CD8-positive, alpha-beta T cell (primary cell): ENCODE measurements at regions of chr19 and their contacts with region 1.

Region 1: DNA sequence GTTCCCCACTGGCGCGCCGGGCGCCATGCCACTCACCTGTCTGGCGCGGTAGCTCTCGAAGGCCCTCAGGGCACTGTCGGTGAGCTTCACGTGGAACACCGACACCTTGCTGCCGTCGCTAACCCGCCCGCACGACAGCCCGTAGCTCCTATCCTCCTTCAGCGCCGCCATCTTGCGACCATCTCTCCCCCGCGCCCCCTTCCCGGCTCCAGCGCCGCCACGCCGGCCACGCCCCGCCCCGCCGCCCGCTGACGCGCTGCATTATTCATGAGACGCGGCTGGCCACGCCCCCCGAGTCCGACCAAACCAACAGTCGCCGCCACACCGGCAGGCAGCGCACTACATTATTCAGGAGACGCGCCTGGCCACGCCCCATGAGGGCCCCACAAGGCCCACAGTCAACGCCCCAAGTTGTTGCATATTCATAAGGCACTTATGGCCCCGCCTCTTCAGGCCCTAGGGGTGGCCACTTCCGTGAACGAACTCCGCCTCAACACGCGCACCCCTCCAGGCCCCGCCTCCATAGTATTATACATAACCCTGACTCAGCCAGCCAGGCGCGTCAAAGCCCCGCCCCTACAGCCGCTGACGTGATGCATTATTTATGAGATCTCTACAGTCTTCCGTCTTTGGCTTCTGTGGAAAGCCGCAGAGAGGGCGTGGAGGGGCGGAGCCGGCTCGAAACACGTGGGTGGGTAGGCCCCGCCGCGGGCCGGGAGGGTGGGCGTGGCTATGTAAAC is at the start of gene ELL:
- DNase-seq: peak; percentile 100
- ATAC-seq: peak; percentile 89
- H3K4me3 ChIP-seq: peak within 1 kb of the TSS; percentile 85 to 91
- H3K4me3 Mint-ChIP-seq: peak within 1 kb of the TSS; percentile 95
- H3K27ac ChIP-seq: peak within 1 kb of the TSS; percentile 92 to 96
- H3K27ac Mint-ChIP-seq: peak within 1 kb of the TSS; percentile 95
- H3K4me1 ChIP-seq: peaks cover 9% of the 10 kb centered on the region
- H3K4me1 Mint-ChIP-seq: peaks cover 26% of the 10 kb centered on the region
- H3K27me3 ChIP-seq: no peaks in the 10 kb centered on the region
- H3K27me3 Mint-ChIP-seq: no peaks in the 10 kb centered on the region
- CTCF ChIP-seq: no peak
- total RNA-seq, gene ELL: 73.4 to 75.2 TPM

Region 2: DNA sequence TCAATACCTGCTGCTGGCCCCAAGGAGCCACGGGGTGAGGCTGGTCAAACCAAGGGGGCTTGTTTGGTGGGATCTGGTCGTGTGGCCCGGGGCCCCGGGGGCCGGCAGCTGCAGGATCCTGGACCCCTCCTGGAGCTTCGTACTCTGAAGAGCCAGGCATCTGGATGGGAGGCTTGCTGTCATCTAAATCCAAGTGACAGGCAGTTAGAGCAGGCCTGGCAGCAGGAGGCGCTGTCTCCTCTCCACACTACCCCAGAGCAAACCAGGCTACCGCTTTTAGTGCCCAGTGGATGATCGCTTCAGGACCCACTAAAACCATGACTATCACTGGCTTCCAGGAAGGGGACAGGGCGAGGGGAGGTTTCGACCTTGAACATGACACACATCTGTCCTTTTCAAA is 1994.0 kb before region 1 on chr19:
- CTCF ChIA-PET with region 1: no interaction called
- POLR2A ChIA-PET with region 1: no interaction called
- intact Hi-C with region 1: no loop called
- DNase-seq: peak; percentile 17 to 65 (median 56)
- ATAC-seq: peak; percentile 63
- H3K4me3 ChIP-seq: no peak overlapping the region
- H3K4me3 Mint-ChIP-seq: no peak overlapping the region
- H3K27ac ChIP-seq: no peak overlapping the region
- H3K27ac Mint-ChIP-seq: no peak overlapping the region
- H3K4me1 ChIP-seq: no peaks in the 10 kb centered on the region
- H3K4me1 Mint-ChIP-seq: no peaks in the 10 kb centered on the region
- H3K27me3 ChIP-seq: no peaks in the 10 kb centered on the region
- H3K27me3 Mint-ChIP-seq: no peaks in the 10 kb centered on the region
- CTCF ChIP-seq: peak; percentile 18

Region 3: DNA sequence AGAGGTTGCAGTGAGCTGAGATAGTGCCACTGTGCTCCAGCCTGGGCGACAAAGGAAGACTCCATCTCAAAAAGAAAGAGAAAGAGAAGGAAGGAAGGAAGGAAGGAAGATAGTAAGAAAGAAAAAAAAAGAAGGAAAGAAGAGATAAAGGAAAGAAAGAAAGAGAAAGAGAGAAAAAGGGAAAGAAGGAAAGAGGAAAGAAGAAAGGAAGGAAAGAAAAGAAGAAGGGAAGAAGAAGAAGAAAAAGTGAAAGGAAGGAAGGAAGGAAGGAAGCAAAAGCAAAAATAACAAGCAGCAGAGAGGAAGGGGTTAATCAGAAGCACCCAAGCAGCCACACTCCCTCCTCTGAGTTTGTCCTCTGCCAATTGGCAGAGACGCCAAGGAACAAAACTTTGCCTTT is 1770.3 kb before region 1 on chr19:
- CTCF ChIA-PET with region 1: no interaction called
- POLR2A ChIA-PET with region 1: no interaction called
- intact Hi-C with region 1: no loop called
- DNase-seq: no peak
- ATAC-seq: no peak
- H3K4me3 ChIP-seq: no peak overlapping the region
- H3K4me3 Mint-ChIP-seq: no peak overlapping the region
- H3K27ac ChIP-seq: no peak overlapping the region
- H3K27ac Mint-ChIP-seq: no peak overlapping the region
- H3K4me1 ChIP-seq: no peaks in the 10 kb centered on the region
- H3K4me1 Mint-ChIP-seq: peaks cover 2% of the 10 kb centered on the region
- H3K27me3 ChIP-seq: no peaks in the 10 kb centered on the region
- H3K27me3 Mint-ChIP-seq: peaks cover 13% of the 10 kb centered on the region
- CTCF ChIP-seq: no peak

Region 4: GRCh38 chr19:17947815-17948513 is 574.1 kb before region 1 on chr19:
- CTCF ChIA-PET with region 1: no interaction called
- POLR2A ChIA-PET with region 1: no interaction called
- intact Hi-C with region 1: loop called in 1 of 2 experiments (anchors 5 kb)
- DNase-seq: peak; percentile 88 to 99 (median 95)
- ATAC-seq: peak; percentile 66
- H3K4me3 ChIP-seq: peak overlapping the region; percentile 35 to 57
- H3K4me3 Mint-ChIP-seq: peak overlapping the region; percentile 74
- H3K27ac ChIP-seq: peak overlapping the region; percentile 44 to 93
- H3K27ac Mint-ChIP-seq: no peak overlapping the region
- H3K4me1 ChIP-seq: peaks cover 53% of the 10 kb centered on the region
- H3K4me1 Mint-ChIP-seq: peaks cover 49% of the 10 kb centered on the region
- H3K27me3 ChIP-seq: peaks cover 39% of the 10 kb centered on the region in 2 experiments
- H3K27me3 Mint-ChIP-seq: peaks cover 30% of the 10 kb centered on the region
- CTCF ChIP-seq: no peak

Region 5: DNA sequence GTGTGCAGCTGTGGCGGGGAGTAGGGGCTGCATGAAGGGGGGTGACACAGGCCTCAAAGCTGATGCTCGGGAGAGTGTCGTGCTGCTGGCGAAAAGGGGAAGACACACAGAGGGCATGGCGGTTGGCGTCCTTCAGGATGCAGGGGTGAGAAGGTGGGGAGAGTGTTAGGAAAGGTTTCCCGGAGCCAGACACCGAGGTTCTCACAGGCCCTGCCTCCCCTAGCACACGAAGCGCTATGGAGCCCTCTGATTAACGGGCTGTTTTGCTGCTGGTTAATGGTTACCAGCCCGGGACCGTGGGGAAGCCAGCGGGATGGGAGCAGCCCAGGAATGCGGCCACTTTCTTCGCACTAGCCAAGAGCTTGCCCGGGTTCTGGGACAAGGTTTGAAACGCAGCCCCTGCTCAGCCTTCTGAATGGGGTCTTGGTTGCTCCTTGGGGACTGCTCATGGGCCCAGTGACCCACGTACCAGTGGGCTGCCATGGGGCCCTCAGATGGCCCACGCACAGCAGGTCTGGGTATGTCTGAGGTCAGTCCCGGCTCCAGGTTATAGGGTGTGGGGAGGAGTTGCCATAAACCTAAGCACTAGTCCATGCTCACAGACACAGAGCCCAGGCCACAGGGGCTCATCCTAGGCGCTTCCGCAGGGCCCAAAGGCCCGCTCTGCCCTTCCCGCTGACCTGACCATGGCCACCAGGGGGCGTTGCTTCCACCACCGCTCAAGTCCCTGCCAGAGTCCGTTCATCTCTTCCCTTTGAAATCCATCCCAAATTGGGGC is 52.8 kb before region 1 on chr19:
- CTCF ChIA-PET with region 1: interaction called, 19 read pairs
- POLR2A ChIA-PET with region 1: interaction called, 3 read pairs
- intact Hi-C with region 1: loop called in 1 of 2 experiments (anchors 2 kb)
- DNase-seq: peak; percentile 24 to 77 (median 62)
- ATAC-seq: peak; percentile 55
- H3K4me3 ChIP-seq: no peak overlapping the region
- H3K4me3 Mint-ChIP-seq: no peak overlapping the region
- H3K27ac ChIP-seq: no peak overlapping the region
- H3K27ac Mint-ChIP-seq: no peak overlapping the region
- H3K4me1 ChIP-seq: peaks cover 13% of the 10 kb centered on the region
- H3K4me1 Mint-ChIP-seq: peaks cover 21% of the 10 kb centered on the region
- H3K27me3 ChIP-seq: no peaks in the 10 kb centered on the region
- H3K27me3 Mint-ChIP-seq: no peaks in the 10 kb centered on the region
- CTCF ChIP-seq: peak; percentile 56

Region 6: GRCh38 chr19:18503971-18504885 is 17.8 kb before region 1 on chr19:
- CTCF ChIA-PET with region 1: interaction called, 56 read pairs
- POLR2A ChIA-PET with region 1: interaction called, 14 read pairs
- intact Hi-C with region 1: no loop called
- DNase-seq: no peak
- ATAC-seq: no peak
- H3K4me3 ChIP-seq: no peak overlapping the region
- H3K4me3 Mint-ChIP-seq: no peak overlapping the region
- H3K27ac ChIP-seq: peak overlapping the region in 1 of 2 experiments; percentile 79
- H3K27ac Mint-ChIP-seq: no peak overlapping the region
- H3K4me1 ChIP-seq: peaks cover 94% of the 10 kb centered on the region
- H3K4me1 Mint-ChIP-seq: peaks cover 91% of the 10 kb centered on the region
- H3K27me3 ChIP-seq: no peaks in the 10 kb centered on the region
- H3K27me3 Mint-ChIP-seq: no peaks in the 10 kb centered on the region
- CTCF ChIP-seq: no peak

Region 7: GRCh38 chr19:18588611-18589379 is 66.7 kb after region 1 on chr19 and contains the start of gene REX1BD:
- CTCF ChIA-PET with region 1: interaction called, 28 read pairs
- POLR2A ChIA-PET with region 1: interaction called, 38 read pairs
- intact Hi-C with region 1: loop called (anchors 1 kb)
- DNase-seq: peak; percentile 71 to 94 (median 89)
- ATAC-seq: peak; percentile 81
- H3K4me3 ChIP-seq: peak within 1 kb of the TSS; percentile 62 to 83
- H3K4me3 Mint-ChIP-seq: peak within 1 kb of the TSS; percentile 93
- H3K27ac ChIP-seq: peak within 1 kb of the TSS; percentile 83 to 86
- H3K27ac Mint-ChIP-seq: peak within 1 kb of the TSS; percentile 95
- H3K4me1 ChIP-seq: peaks cover 31% of the 10 kb centered on the region
- H3K4me1 Mint-ChIP-seq: peaks cover 34% of the 10 kb centered on the region
- H3K27me3 ChIP-seq: no peaks in the 10 kb centered on the region
- H3K27me3 Mint-ChIP-seq: no peaks in the 10 kb centered on the region
- CTCF ChIP-seq: peak; percentile 77
- total RNA-seq, gene REX1BD: 85.6 to 91.1 TPM

Region 8: DNA sequence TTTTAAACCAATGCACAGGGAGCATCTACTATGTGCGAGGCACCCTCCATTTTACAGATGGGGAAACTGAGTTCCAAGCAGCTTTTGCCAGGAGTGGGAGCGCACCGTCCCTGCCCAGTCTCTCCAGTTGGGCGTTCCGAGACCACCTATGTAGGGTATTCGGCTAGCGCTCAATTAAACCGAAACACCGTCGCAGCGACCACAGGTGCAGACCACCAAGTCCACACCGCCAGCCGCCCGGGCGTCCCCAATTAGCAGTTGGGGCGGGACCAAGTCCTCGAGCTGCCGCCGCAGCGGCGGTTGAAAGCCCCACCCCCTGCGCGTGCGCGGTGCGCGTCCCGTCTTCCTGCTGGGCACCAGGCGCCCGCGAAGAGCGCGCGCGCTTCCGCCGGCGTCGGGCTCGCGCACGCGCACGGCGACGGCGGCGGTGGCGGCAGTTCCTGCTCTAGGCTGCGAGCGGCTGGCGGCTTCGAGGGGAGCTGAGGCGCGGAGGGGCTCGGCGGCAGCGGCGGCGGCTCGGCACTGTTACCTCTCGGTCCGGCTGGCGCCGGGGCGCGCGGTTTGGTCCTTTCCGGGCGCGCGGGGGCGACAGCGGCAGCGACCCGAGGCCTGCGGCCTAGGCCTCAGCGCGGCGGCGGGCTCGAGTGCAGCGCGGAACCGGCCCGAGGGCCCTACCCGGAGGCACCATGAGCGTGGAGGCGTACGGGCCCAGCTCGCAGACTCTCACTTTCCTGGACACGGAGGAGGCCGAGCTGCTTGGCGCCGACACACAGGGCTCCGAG is 309.7 kb after region 1 on chr19 and contains the start of gene UPF1:
- CTCF ChIA-PET with region 1: no interaction called
- POLR2A ChIA-PET with region 1: interaction called, 5 read pairs
- intact Hi-C with region 1: loop called (anchors 1 to 5 kb)
- DNase-seq: peak; percentile 92 to 98 (median 96)
- ATAC-seq: peak; percentile 79
- H3K4me3 ChIP-seq: peak within 1 kb of the TSS; percentile 80 to 86
- H3K4me3 Mint-ChIP-seq: peak within 1 kb of the TSS; percentile 92
- H3K27ac ChIP-seq: peak within 1 kb of the TSS; percentile 69 to 73
- H3K27ac Mint-ChIP-seq: peak within 1 kb of the TSS; percentile 89
- H3K4me1 ChIP-seq: peaks cover 41% of the 10 kb centered on the region
- H3K4me1 Mint-ChIP-seq: peaks cover 38% of the 10 kb centered on the region
- H3K27me3 ChIP-seq: peaks cover 0 to 3% of the 10 kb centered on the region in 2 experiments
- H3K27me3 Mint-ChIP-seq: peaks cover 2% of the 10 kb centered on the region
- CTCF ChIP-seq: no peak
- total RNA-seq, gene UPF1: 157 to 175 TPM